Left ventricle myocardium superior (tissue), 1 donor: ENCODE measurements at regions of chr12 and their contacts with region 1.

Region 1: GRCh38 chr12:65556681-65557437 is 267.4 kb upstream of the HMGA2 start:
- DNase-seq: peak; percentile 89
- ATAC-seq: peak; percentile 99

Region 2: GRCh38 chr12:66087365-66087943 is 530.6 kb after region 1 on chr12:
- intact Hi-C with region 1: loop called (anchors 5 kb)
- DNase-seq: peak; percentile 61
- ATAC-seq: peak; percentile 66